ENCODE measurements at regions of chr10 and their contacts with region 1.

Region 1: DNA sequence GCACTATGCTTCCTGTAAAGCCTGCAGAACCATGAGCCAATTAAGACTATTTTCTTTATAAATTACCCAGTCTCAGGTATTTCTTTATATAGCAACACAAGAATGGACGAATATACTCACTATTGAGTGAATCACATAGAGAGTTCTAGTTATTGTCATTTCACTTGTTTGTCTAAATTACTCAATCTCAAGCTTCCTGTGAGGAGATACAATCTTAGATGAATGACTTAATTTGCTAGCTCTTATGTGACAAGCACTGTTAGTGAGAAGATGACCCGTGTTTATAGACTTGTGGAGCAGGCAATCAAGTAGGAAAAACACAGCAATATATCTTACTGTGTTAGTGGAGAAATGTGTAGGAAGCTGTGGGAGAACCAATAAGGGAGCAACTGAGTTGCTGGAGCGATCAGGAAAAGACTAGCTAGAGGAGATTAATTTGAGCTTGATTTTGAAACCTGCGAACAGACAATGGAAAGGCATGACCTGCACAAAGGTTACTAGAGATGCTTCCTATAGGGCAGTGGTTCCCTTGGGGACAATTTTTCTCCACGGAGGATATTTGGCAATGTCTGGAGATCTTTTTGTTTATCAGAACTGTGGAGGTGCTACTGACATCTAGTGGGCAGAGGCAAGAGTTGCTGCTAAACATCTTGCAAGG is 481.1 kb downstream of the SH2D4B start:
- DNase-seq: peak; percentile 43
- CTCF ChIP-seq: peak; percentile 79

Region 2: DNA sequence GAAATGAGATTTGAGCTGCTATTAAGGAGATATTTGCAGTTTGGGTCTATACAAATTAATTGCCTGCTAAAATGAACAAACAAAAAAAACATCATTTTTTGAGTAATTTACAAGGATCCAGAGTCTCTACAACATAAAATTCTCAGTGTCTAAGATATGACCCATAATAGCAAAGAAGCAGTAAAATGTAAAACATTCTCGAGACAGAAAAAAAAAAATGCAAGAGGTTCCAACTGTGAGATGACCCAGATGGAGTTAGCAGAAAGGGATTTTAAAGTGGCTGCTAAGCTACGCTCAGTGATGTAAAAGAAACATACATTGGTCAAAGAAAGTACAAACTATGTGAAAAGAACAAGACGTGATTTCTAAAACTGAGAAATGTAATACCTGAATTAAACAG is 10.1 kb before region 1 on chr10:
- CTCF ChIA-PET with region 1: interaction called, 23 read pairs
- POLR2A ChIA-PET with region 1: no interaction called
- DNase-seq: no peak
- CTCF ChIP-seq: no peak